PC-3 (cell line): ENCODE measurements at regions of chr1 and their contacts with region 1.

Region 1: GRCh38 chr1:8031176-8031785 is 5.2 kb upstream of the ERRFI1 start:
- DNase-seq: peak; percentile 76
- ATAC-seq: no peak
- H3K4me3 ChIP-seq: no peak overlapping the region
- H3K27ac ChIP-seq: peak overlapping the region; percentile 70
- H3K4me1 ChIP-seq: peaks cover 36% of the 10 kb centered on the region
- H3K27me3 ChIP-seq: no peaks in the 10 kb centered on the region
- CTCF ChIP-seq: peak; percentile 61

Region 2: DNA sequence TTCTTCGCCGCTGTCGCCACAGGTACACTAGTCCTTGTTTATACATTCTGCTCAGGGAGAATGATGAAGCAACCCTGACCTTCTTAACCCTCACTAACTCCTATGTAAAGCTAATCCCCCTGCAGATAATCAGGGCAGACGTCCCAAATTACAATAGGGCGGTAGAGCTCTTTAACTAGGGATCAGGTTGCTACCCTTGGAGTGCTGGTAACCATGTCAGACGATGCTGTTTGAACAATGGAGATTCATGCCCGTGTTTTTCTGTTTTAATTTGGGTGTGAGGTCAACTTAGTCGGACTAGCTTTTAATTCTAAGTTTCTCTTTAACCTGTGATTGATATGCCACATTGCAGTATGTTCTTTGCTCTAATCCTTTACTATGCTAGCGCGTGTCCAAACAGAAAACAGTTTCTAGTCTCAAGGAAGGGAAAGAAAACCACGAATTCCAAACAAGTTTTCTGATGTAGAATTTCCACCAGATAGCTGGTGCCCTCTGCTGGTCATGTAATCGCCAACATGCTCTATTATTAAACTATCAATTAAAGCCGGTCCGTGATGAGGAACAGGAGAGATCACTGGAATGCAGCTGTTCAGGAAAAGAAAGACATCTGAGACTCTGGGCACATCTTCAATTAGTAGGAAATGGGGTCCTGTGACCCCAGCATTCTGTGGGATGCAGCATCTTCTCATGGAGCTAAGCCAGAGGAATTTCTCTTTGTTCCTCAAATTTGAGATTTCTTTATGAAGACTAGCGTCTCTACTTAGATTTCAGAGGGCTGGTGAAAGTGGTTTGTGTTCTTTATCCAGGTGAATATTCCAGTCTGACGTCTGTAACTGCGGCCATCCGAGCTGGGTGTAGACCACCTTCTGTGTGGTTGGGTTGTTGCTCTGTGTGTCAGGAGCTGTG is 278.5 kb before region 1 on chr1:
- CTCF ChIA-PET with region 1: no interaction called
- POLR2A ChIA-PET with region 1: no interaction called
- intact Hi-C with region 1: no loop called
- DNase-seq: peak; percentile 78
- ATAC-seq: peak; percentile 83
- H3K4me3 ChIP-seq: peak overlapping the region; percentile 69
- H3K27ac ChIP-seq: no peak overlapping the region
- H3K4me1 ChIP-seq: no peaks in the 10 kb centered on the region; the same call in 1 of the 2 replicates
- H3K27me3 ChIP-seq: peaks cover 12% of the 10 kb centered on the region; the same call in 1 of the 2 replicates
- CTCF ChIP-seq: peak; percentile 90

Region 3: GRCh38 chr1:7975212-7975865 is 55.9 kb before region 1 on chr1:
- CTCF ChIA-PET with region 1: no interaction called
- POLR2A ChIA-PET with region 1: interaction called, 3 read pairs
- intact Hi-C with region 1: loop called (anchors 2 kb)
- DNase-seq: peak; percentile 91
- ATAC-seq: peak; percentile 99
- H3K4me3 ChIP-seq: no peak overlapping the region
- H3K27ac ChIP-seq: no peak overlapping the region
- H3K4me1 ChIP-seq: no peaks in the 10 kb centered on the region
- H3K27me3 ChIP-seq: no peaks in the 10 kb centered on the region
- CTCF ChIP-seq: peak; percentile 98

Region 4: GRCh38 chr1:7989762-7990428 is 41.4 kb before region 1 on chr1:
- CTCF ChIA-PET with region 1: no interaction called
- POLR2A ChIA-PET with region 1: no interaction called
- intact Hi-C with region 1: no loop called
- DNase-seq: no peak
- ATAC-seq: no peak
- H3K4me3 ChIP-seq: no peak overlapping the region
- H3K27ac ChIP-seq: no peak overlapping the region
- H3K4me1 ChIP-seq: no peaks in the 10 kb centered on the region
- H3K27me3 ChIP-seq: no peaks in the 10 kb centered on the region
- CTCF ChIP-seq: no peak

Region 5: DNA sequence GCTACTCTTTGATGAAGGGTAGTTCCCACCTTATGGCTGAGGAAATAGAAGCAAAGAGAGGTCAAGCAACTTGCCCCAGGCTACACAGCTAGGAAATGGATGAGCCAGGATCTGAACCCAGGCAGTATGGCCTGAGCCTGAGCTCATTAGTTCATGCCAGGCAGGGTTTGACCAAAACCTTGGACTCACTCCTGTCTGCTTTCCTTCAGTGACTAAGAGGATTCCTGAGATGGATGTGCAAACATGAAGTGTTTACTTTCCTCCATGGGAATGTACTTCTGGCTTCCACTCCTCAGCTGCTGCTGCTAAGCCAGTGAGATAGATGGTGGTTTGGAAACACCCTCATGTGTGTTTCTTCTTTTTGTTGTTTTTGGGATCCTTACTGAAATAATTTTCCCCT is 29.9 kb after region 1 on chr1:
- CTCF ChIA-PET with region 1: interaction called, 3 read pairs
- POLR2A ChIA-PET with region 1: interaction called, 5 read pairs
- intact Hi-C with region 1: loop called (anchors 2 kb)
- DNase-seq: peak; percentile 95
- ATAC-seq: peak; percentile 92
- H3K4me3 ChIP-seq: peak overlapping the region; percentile 57
- H3K27ac ChIP-seq: peak overlapping the region; percentile 99
- H3K4me1 ChIP-seq: peaks cover 41% of the 10 kb centered on the region
- H3K27me3 ChIP-seq: no peaks in the 10 kb centered on the region
- CTCF ChIP-seq: no peak

Region 6: DNA sequence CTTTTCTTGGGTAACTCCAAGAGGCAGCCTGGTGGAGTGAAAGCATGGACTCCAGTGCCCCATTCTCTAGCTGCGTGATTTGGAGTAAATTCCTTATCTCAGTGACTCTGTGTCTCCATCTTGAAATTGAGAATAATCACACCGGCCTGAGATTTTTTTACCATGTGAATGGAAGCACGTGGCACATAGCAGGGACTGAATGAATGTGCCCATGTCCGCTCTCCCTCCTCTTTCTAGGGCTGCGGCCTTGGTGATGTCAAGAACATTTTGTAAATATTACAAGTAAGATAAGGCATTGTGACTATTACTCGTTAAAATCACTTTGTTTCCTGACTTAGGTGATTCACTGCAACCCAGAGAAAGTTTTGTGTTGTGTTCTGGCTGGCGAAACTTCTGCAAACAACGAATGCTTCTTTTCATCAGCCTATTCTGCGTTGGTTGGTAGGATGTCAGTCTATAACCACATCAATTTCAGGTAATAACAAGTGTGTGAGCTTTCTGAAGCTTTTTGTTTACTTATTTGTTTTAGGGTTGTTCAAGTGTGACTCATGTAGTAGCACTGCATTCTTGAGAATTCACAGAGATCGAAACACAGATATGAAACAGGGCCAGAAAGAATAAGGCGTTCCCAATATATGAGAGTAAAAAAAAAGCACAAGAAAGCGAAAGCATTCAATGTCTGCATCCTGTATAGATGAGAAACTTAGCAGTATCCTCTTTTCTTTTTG is 150.9 kb after region 1 on chr1:
- CTCF ChIA-PET with region 1: no interaction called
- POLR2A ChIA-PET with region 1: no interaction called
- intact Hi-C with region 1: loop called (anchors 1 kb)
- DNase-seq: peak; percentile 98
- ATAC-seq: peak; percentile 90
- H3K4me3 ChIP-seq: no peak overlapping the region
- H3K27ac ChIP-seq: peak overlapping the region; percentile 99
- H3K4me1 ChIP-seq: peaks cover 27% of the 10 kb centered on the region
- H3K27me3 ChIP-seq: no peaks in the 10 kb centered on the region
- CTCF ChIP-seq: no peak

Region 7: GRCh38 chr1:8238851-8239305 is 207.6 kb after region 1 on chr1:
- CTCF ChIA-PET with region 1: interaction called, 6 read pairs
- POLR2A ChIA-PET with region 1: no interaction called
- intact Hi-C with region 1: loop called (anchors 2 kb)
- DNase-seq: peak; percentile 66
- ATAC-seq: peak; percentile 55
- H3K4me3 ChIP-seq: peak overlapping the region; percentile 33; the same call in 1 of the 2 replicates
- H3K27ac ChIP-seq: peak overlapping the region; percentile 86
- H3K4me1 ChIP-seq: peaks cover 29% of the 10 kb centered on the region
- H3K27me3 ChIP-seq: no peaks in the 10 kb centered on the region
- CTCF ChIP-seq: peak; percentile 44; the same call in 1 of the 2 replicates

Region 8: GRCh38 chr1:8314346-8315280 is 283.3 kb after region 1 on chr1:
- CTCF ChIA-PET with region 1: interaction called, 8 read pairs
- POLR2A ChIA-PET with region 1: interaction called, 3 read pairs
- intact Hi-C with region 1: loop called (anchors 1 kb)
- DNase-seq: peak; percentile 90
- ATAC-seq: peak; percentile 79
- H3K4me3 ChIP-seq: no peak overlapping the region
- H3K27ac ChIP-seq: peak overlapping the region; percentile 62
- H3K4me1 ChIP-seq: peaks cover 29% of the 10 kb centered on the region
- H3K27me3 ChIP-seq: no peaks in the 10 kb centered on the region
- CTCF ChIP-seq: peak; percentile 91